Activated CD4-positive, alpha-beta T cell treated with anti-CD3 and anti-CD28 coated beads, Interleukin-2, amount 10 ng/mL, durations not matched to agents 24 days and 14 days (primary cell): ENCODE measurements at regions of chr17 and their contacts with region 1.

Region 1: GRCh38 chr17:30970831-30971567 is at the start of gene RNF135:
- DNase-seq: peak; percentile 90
- H3K4me3 Mint-ChIP-seq: peak within 1 kb of the TSS; percentile 94
- H3K27ac Mint-ChIP-seq: peak within 1 kb of the TSS; percentile 98
- H3K4me1 Mint-ChIP-seq: peaks cover 34% of the 10 kb centered on the region
- H3K27me3 Mint-ChIP-seq: no peaks in the 10 kb centered on the region
- total RNA-seq, gene RNF135: 10.2 and 10.6 TPM in 2 replicates

Region 2: DNA sequence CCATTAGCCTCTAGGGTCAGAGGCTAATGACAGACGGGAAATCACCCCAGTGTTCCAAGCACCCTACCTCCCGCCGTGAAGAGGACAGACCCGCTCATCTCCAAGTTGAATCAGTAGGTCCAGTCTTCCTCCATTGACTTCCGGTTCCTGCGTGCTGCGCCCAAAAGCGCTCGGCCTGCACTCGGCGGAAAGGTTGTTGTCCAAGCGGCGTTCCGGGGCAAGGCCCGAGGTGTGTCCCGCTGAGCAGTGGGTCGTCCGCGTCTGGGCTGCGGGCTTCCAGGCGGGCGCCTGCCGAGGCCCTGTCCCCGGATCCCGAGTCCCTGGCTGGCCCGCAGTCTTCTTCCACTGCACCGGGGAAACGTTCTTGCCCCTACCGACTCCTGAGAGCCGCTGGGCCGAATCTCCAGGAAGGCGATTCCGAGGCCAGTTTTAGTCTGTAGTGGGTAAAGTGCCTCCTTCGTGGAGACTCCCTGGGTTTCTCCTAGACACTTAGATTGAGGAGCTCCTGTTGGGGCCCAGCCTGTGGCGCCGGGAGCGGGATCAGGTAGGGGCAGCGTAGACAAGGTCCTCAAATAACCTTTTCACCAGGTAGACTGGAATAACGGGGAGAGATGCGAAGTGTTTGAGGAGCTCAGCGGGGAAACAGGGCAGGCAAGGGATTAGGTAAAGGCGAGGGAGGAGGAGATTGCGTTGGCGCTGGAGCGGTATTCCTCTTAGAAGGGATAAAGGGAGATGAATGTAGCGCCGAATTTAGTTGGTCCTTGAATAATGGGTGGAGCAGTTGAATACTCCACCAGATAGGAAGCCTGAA is 64.7 kb before region 1 on chr17 and contains the start of gene TEFM:
- intact Hi-C with region 1: loop called (anchors 1 kb)
- DNase-seq: peak; percentile 97
- H3K4me3 Mint-ChIP-seq: peak within 1 kb of the TSS; percentile 97
- H3K27ac Mint-ChIP-seq: peak within 1 kb of the TSS; percentile 91
- H3K4me1 Mint-ChIP-seq: peaks cover 26% of the 10 kb centered on the region
- H3K27me3 Mint-ChIP-seq: no peaks in the 10 kb centered on the region
- total RNA-seq, gene TEFM: 18.9 and 19.7 TPM in 2 replicates